HEK293 (cell line): ENCODE measurements at regions of chr10 and their contacts with region 1.

Region 1: GRCh38 chr10:89592539-89592938 is 52.5 kb downstream of the PANK1 start:
- H3K4me3 ChIP-seq: no peak overlapping the region
- H3K27ac ChIP-seq: no peak overlapping the region
- H3K4me1 ChIP-seq: no peaks in the 10 kb centered on the region
- CTCF ChIP-seq: no peak

Region 2: GRCh38 chr10:89604200-89604599 is 11.7 kb after region 1 on chr10:
- CTCF ChIA-PET with region 1: interaction called, 3 read pairs
- POLR2A ChIA-PET with region 1: interaction called, 10 read pairs
- H3K4me3 ChIP-seq: no peak overlapping the region
- H3K27ac ChIP-seq: no peak overlapping the region
- H3K4me1 ChIP-seq: no peaks in the 10 kb centered on the region; the same call in 1 of the 2 replicates
- CTCF ChIP-seq: no peak